Tibial artery (tissue), 4 donors: ENCODE measurements at regions of chr20 and their contacts with region 1.

Region 1: DNA sequence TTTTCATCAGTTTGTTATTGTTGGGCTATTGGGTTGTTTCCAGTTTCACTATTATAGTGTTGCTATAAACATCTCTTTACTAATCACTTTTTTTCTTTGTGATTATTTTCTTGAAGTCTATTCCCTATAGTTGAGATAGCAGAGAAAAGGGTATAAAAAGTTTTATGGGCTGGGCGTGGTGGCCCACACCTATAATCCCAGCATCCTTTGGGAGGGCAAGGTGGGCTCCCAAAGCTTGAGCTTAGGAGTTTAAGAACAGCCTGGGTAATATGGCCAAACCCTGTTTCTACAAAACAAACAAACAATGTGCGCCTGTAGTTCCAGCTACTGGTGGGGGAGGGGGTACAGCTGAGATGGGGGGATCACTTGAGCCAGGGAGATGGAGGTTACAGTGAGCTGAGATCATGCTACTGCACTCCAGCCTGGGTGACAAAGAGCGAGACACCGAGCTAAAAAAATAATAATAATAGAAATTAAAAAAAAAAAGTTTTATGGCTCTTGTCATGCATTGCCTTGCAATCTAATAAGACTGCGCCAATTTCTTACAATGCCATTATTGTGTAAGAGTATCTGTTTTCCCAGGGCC is 3.8 kb downstream of the ACSS2 start:
- DNase-seq: no peak
- H3K4me3 ChIP-seq: no peak overlapping the region
- H3K27ac ChIP-seq: no peak overlapping the region
- H3K4me1 ChIP-seq: peaks cover 0 to 27% (median 13%) of the 10 kb centered on the region in 4 donors
- H3K27me3 ChIP-seq: no peaks in the 10 kb centered on the region
- CTCF ChIP-seq: no peak

Region 2: DNA sequence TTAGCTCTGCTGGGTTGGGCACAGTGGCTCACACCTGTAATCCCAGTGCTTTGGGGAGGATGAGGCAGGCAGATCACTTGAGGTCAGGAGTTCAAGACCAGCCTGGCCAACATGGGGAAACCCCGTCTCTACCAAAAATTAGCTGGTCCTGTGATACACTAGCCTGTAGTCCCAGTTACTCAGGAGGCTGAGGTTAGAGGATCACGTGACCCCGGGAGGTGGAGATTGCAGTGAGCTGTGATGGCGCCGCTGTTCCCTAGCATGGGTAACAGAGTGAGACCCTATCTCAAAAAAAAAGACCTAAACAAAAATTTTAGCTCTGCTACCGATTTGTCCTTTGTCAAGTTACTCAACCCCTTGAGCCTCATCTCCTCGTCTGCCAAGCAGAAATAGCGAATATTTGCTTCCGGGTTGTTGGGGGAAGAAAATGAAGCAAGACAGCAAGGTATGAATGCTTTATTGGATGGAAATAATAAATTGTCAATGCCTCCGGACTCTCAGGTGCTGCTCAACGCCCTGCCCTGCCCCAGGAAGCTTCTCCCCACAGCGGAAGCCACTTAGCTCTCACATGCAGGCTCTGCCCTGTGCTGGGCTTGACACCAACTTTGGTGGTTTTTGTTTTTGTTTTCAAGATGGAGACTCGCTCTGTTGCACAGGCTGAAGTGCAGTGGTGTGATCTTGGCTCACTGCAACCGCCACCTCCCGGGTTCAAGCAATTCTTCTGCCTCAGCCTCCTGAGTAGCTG is 542.0 kb before region 1 on chr20:
- intact Hi-C with region 1: no loop called
- DNase-seq: no peak
- H3K4me3 ChIP-seq: no peak overlapping the region
- H3K27ac ChIP-seq: no peak overlapping the region
- H3K4me1 ChIP-seq: no peaks in the 10 kb centered on the region
- H3K27me3 ChIP-seq: no peaks in the 10 kb centered on the region
- CTCF ChIP-seq: no peak

Region 3: DNA sequence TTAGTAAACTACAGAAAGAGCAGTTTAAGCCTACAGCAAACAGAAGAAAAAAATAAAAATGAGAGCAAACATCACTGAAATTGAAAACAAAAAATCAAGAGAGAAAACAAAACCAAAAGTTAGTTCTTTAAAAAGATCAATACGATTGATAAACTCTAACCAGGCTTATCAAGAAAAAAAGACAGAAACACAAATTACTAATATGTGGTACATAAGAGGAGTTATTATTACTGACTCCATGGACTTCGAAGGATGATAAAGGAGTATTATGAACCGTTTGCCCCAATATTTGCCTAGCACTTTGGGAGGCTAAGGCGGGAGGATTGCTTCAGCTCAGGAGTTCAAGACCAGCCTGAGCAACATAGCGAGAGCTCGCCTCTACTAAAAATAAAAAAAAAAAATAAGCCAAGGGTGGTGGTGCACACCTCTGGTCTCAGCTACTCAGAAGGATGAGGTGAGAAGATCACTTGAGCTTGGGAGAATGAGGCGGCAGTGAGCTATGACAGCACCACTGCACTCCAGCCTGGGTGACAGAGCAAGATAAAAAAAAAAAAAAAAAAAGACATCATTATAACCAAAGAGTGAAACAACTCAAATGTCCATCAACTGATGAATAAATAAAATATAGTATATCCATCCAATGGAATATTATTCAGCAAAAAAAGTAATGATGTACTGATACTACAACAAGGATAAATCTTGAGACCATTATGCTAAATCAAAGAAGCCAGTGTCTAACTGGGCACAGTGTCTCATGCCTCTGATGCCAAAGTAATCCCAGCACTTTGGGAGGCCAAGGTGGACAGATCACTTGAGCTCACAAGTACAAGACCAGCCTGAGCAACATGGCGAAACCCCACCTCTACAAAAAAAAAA is 199.5 kb after region 1 on chr20:
- intact Hi-C with region 1: loop called (anchors 5 kb)
- DNase-seq: no peak
- H3K4me3 ChIP-seq: no peak overlapping the region
- H3K27ac ChIP-seq: no peak overlapping the region
- H3K4me1 ChIP-seq: peaks cover 0 to 42% (median 0%) of the 10 kb centered on the region in 4 donors
- H3K27me3 ChIP-seq: no peaks in the 10 kb centered on the region
- CTCF ChIP-seq: no peak